ENCODE measurements at regions of chr17 and their contacts with region 1.

Region 1: GRCh38 chr17:43645765-43646481 is 15.8 kb downstream of the MEOX1 start:
- DNase-seq: peak; percentile 89

Region 2: GRCh38 chr17:43591779-43592562 is 54.0 kb before region 1 on chr17:
- intact Hi-C with region 1: loop called (anchors 5 kb)
- DNase-seq: peak; percentile 88

Region 3: DNA sequence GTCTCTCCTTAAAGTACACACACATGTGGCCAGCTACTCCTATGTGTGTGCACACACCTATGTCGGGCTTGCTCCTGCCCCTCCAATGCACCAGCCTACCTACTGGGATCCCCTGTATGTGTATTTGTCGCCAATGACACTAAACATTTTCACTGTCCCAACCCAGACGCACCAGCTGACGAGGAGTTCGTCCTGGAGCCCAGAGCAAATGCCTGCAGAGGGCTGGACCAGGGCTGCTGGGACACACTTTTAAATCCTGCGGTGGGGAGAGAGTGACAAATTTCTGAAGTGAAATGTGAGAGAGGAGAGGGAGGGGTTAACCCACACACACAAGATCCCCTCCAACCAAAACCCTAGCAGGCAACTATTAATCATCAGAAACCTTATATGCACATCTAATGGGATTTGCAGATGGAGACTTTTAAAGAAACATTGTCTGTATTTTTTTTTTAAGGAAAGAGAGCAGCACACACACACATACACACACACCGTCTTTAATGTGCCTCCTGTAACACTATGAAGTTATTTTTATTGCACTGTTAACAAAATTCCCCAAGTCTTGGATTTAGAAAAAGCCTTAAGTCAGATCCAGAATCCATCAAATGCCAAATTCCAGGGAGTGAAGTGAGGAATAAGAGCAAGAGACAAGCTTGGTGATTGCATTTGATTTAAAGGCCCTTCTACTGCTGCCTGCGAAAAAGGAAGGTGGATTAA is 15.9 kb after region 1 on chr17 and contains the start of gene MEOX1:
- intact Hi-C with region 1: loop called (anchors 1 kb)
- DNase-seq: no peak
- total RNA-seq, gene MEOX1: 19.8 TPM

Measured in cardiac septum (tissue), 1 donor.